ENCODE measurements at regions of chr10 and their contacts with region 1.

Region 1: GRCh38 chr10:91944880-91945630 is 21.5 kb downstream of the BTAF1 start:
- DNase-seq: peak; percentile 17
- H3K4me3 Mint-ChIP-seq: peak overlapping the region; percentile 59
- H3K27ac Mint-ChIP-seq: peak overlapping the region; percentile 95
- H3K4me1 Mint-ChIP-seq: peaks cover 29% of the 10 kb centered on the region
- H3K27me3 Mint-ChIP-seq: no peaks in the 10 kb centered on the region

Region 2: GRCh38 chr10:91923371-91924211 is 21.5 kb before region 1 on chr10 and contains the start of gene BTAF1:
- intact Hi-C with region 1: loop called (anchors 1 kb)
- DNase-seq: peak; percentile 89
- H3K4me3 Mint-ChIP-seq: peak within 1 kb of the TSS; percentile 98
- H3K27ac Mint-ChIP-seq: peak within 1 kb of the TSS; percentile 99
- H3K4me1 Mint-ChIP-seq: peaks cover 36% of the 10 kb centered on the region
- H3K27me3 Mint-ChIP-seq: peaks cover 9% of the 10 kb centered on the region
- total RNA-seq, gene BTAF1: 58.8 and 59.2 TPM in 2 replicates

Region 3: GRCh38 chr10:92103376-92104090 is 158.5 kb after region 1 on chr10:
- intact Hi-C with region 1: loop called (anchors 1 kb)
- DNase-seq: no peak
- H3K4me3 Mint-ChIP-seq: no peak overlapping the region
- H3K27ac Mint-ChIP-seq: no peak overlapping the region
- H3K4me1 Mint-ChIP-seq: peaks cover 22% of the 10 kb centered on the region
- H3K27me3 Mint-ChIP-seq: no peaks in the 10 kb centered on the region

Measured in activated T-helper 1 cell treated with anti-CD3 and anti-CD28 coated beads, Interleukin-12 subunit alpha, Interleukin-12 subunit beta, Interleukin-2, Interleukin-4 antibody, amounts not matched to agents 30 ng/mL and 10 ng/mL and 1 ng/mL, durations not matched to agents 14 hours and 24 hours and 36 hours (primary cell).